Endothelial cell of umbilical vein (primary cell): ENCODE measurements at regions of chr6 and their contacts with region 1.

Region 1: GRCh38 chr6:46042355-46042999 is 26.8 kb upstream of the CLIC5 start:
- DNase-seq: peak; percentile 73
- H3K4me3 ChIP-seq: no peak overlapping the region
- H3K27ac ChIP-seq: no peak overlapping the region
- H3K4me1 ChIP-seq: peaks cover 29% of the 10 kb centered on the region
- H3K27me3 ChIP-seq: no peaks in the 10 kb centered on the region
- CTCF ChIP-seq: peak; percentile 52 to 60
- POLR2A ChIP-seq: no peak

Region 2: DNA sequence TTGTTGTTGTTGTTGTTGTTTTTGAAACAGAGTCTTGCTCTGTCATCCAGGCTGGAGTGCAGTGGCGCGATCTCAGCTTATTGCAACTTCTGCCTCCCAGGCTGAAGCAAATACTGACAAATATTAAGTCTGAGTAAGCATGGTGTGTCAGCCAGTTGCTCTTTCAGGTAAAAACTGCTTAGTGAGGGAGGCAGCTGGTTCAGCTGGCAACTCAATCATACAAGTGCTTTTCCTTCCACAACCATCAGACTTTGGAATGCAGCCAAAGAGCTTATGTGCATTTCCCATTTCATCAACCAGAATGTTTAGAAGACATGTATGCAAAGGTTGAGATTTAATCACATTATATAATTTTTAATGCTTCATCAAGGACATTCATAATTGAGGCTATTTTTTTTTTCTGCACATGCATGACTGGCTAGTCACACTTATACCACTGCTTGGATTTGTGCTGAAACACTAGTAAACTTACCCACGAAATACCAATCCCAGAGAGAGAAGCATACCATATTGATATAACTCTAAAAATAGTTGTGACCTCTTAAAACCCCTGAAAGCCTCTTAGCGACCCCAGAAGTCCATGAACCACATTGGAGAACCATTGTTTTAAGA is 82.8 kb before region 1 on chr6:
- CTCF ChIA-PET with region 1: no interaction called
- POLR2A ChIA-PET with region 1: no interaction called
- dilution Hi-C with region 1: no loop called
- intact Hi-C with region 1: no loop called
- DNase-seq: peak; percentile 7
- H3K4me3 ChIP-seq: no peak overlapping the region
- H3K27ac ChIP-seq: no peak overlapping the region
- H3K4me1 ChIP-seq: no peaks in the 10 kb centered on the region
- H3K27me3 ChIP-seq: no peaks in the 10 kb centered on the region
- CTCF ChIP-seq: no peak
- POLR2A ChIP-seq: no peak

Region 3: DNA sequence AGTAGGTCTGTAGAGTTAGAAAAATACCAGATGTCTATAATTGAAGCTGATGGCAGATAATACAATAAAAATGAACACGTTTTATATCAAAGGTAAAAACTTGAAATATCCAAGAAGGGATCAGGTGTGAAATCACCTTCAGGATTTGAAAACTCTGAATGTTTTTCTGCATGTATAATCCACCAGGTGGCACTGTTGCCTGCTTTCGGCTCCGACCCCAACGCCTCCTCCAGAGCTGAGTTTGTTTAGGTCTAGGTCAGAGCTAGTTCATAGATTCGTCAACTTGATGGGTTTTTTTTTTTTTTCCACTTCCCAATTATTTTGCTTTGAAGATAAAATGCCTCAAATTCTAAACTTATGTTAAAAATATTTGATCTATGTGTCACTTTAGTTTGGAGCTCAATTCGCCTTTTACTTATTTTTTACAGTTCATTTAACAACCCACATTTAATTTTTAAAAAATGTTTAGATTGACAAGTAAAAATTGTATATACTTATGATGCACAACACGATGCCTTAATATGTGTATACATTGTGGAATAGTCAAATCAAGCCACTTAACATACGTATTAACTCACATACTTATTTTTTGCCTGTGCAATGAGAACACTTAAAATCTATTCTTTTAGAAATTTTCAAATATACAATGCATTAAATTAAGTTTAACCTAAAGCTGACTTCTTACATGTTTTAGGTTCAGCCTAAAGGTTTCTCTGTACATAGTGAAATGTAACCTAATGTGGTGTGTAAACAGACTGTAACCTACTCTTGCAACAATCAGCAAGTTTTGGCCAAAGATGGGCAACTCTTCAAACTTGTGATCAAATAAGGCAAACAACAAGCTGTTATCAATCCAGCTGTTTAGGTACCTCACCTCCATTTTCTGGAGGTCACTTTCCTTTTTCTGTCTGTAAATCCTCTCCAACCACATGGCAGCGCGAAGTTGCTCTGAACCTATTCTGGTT is 47.9 kb after region 1 on chr6:
- CTCF ChIA-PET with region 1: interaction called, 18 read pairs
- POLR2A ChIA-PET with region 1: no interaction called
- dilution Hi-C with region 1: no loop called
- intact Hi-C with region 1: loop called (anchors 1 kb)
- DNase-seq: peak; percentile 58
- H3K4me3 ChIP-seq: no peak overlapping the region
- H3K27ac ChIP-seq: no peak overlapping the region
- H3K4me1 ChIP-seq: no peaks in the 10 kb centered on the region
- H3K27me3 ChIP-seq: peaks cover 5 to 13% of the 10 kb centered on the region in 2 experiments
- CTCF ChIP-seq: peak; percentile 59 to 73
- POLR2A ChIP-seq: no peak

Region 4: GRCh38 chr6:46184114-46184513 is 141.6 kb after region 1 on chr6:
- CTCF ChIA-PET with region 1: interaction called, 4 read pairs
- POLR2A ChIA-PET with region 1: no interaction called
- dilution Hi-C with region 1: no loop called
- intact Hi-C with region 1: loop called (anchors 10 kb)
- DNase-seq: peak; percentile 84
- H3K4me3 ChIP-seq: no peak overlapping the region
- H3K27ac ChIP-seq: no peak overlapping the region
- H3K4me1 ChIP-seq: peaks cover 6% of the 10 kb centered on the region
- H3K27me3 ChIP-seq: peaks cover 0 to 6% of the 10 kb centered on the region in 2 experiments
- CTCF ChIP-seq: no peak
- POLR2A ChIP-seq: no peak

Region 5: GRCh38 chr6:46410334-46410953 is 368.0 kb after region 1 on chr6:
- CTCF ChIA-PET with region 1: interaction called, 20 read pairs
- POLR2A ChIA-PET with region 1: no interaction called
- dilution Hi-C with region 1: no loop called
- intact Hi-C with region 1: loop called (anchors 1 kb)
- DNase-seq: peak; percentile 50
- H3K4me3 ChIP-seq: no peak overlapping the region
- H3K27ac ChIP-seq: no peak overlapping the region
- H3K4me1 ChIP-seq: no peaks in the 10 kb centered on the region
- H3K27me3 ChIP-seq: peaks cover 0 to 9% of the 10 kb centered on the region in 2 experiments
- CTCF ChIP-seq: peak; percentile 40 to 43
- POLR2A ChIP-seq: no peak

Region 6: GRCh38 chr6:46746696-46747095 is 704.2 kb after region 1 on chr6 and contains the start of gene ANKRD66:
- CTCF ChIA-PET with region 1: no interaction called
- POLR2A ChIA-PET with region 1: no interaction called
- dilution Hi-C with region 1: no loop called
- intact Hi-C with region 1: no loop called
- DNase-seq: no peak
- H3K4me3 ChIP-seq: no peak within 1 kb of the TSS
- H3K27ac ChIP-seq: no peak within 1 kb of the TSS
- H3K4me1 ChIP-seq: no peaks in the 10 kb centered on the region
- H3K27me3 ChIP-seq: peaks cover 0 to under 1% of the 10 kb centered on the region in 2 experiments
- CTCF ChIP-seq: no peak
- POLR2A ChIP-seq: no peak
- total RNA-seq, gene ANKRD66: not detected in 2 replicates

Region 7: GRCh38 chr6:46781478-46782378 is 739.3 kb after region 1 on chr6:
- CTCF ChIA-PET with region 1: no interaction called
- POLR2A ChIA-PET with region 1: no interaction called
- dilution Hi-C with region 1: no loop called
- intact Hi-C with region 1: loop called (anchors 2 kb)
- DNase-seq: peak; percentile 63
- H3K4me3 ChIP-seq: no peak overlapping the region
- H3K27ac ChIP-seq: no peak overlapping the region
- H3K4me1 ChIP-seq: no peaks in the 10 kb centered on the region
- H3K27me3 ChIP-seq: peaks cover 0 to 4% of the 10 kb centered on the region in 2 experiments
- CTCF ChIP-seq: peak; percentile 50 to 60
- POLR2A ChIP-seq: no peak

Region 8: GRCh38 chr6:47264775-47265184 is 1222.3 kb after region 1 on chr6:
- CTCF ChIA-PET with region 1: no interaction called
- POLR2A ChIA-PET with region 1: no interaction called
- dilution Hi-C with region 1: no loop called
- intact Hi-C with region 1: loop called (anchors 10 kb)
- DNase-seq: peak; percentile 97
- H3K4me3 ChIP-seq: no peak overlapping the region
- H3K27ac ChIP-seq: peak overlapping the region; percentile 76
- H3K4me1 ChIP-seq: peaks cover 63% of the 10 kb centered on the region
- H3K27me3 ChIP-seq: no peaks in the 10 kb centered on the region
- CTCF ChIP-seq: no peak
- POLR2A ChIP-seq: no peak